ENCODE measurements at regions of chr2 and their contacts with region 1.

Region 1: GRCh38 chr2:101151141-101151858 is at the start of gene TBC1D8:
- DNase-seq: peak; percentile 66
- ATAC-seq: peak; percentile 85
- H3K4me3 ChIP-seq: peak within 1 kb of the TSS; percentile 51 to 66 (median 57)
- H3K4me3 Mint-ChIP-seq: peak within 1 kb of the TSS; percentile 80
- H3K27ac ChIP-seq: no peak within 1 kb of the TSS
- H3K27ac Mint-ChIP-seq: peak within 1 kb of the TSS; percentile 46
- H3K4me1 ChIP-seq: peaks cover 23 to 29% of the 10 kb centered on the region in 2 donors
- H3K4me1 Mint-ChIP-seq: peaks cover 27% of the 10 kb centered on the region
- H3K27me3 ChIP-seq: peaks cover 0 to 26% (median 19%) of the 10 kb centered on the region in 4 experiments
- H3K27me3 Mint-ChIP-seq: peaks cover 24% of the 10 kb centered on the region
- CTCF ChIP-seq: no peak
- total RNA-seq, gene TBC1D8: 15.7 and 18.8 TPM in 2 replicates

Region 2: DNA sequence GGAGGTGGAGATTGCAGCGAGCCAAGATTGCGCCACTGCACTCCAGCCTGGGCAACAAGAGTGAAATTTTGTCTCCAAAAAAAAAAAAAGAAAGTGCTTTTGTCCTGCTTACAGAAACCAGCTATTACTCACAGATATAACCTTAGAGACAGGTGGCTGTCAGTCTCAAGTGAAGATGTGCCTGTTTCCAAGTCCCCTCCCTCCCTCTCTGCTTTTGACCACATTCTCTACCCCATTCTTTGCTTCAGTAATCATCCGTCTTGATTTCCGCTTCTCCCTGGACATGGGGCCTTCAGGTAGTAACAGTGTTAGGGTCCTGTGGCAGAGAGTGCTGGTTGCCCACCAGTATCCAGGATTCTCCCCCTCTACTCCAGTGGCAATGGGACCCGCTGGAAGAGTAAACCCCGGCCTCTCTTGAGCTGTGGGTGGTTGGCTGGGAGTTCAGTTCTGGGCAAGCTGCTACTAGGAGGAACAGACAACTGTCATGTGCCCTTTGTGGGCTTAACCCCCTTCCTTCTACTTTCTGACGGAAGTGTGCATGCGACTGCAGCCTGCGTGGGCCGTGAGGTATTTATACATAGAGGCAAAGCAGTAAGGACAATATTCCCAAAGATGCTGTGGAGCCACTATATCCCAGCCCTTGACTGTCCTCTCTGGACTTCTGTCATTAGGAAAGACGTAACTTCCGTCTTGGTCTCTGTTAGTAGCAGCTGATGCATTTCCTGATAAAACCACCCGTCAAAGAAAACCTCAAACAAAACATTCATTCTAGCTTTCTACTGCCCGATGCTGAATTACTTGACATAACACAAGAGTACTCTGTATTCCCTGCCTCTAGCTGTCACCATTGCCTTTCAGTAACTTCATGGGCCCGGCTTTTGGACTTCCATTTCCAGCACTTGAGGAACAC is 570.7 kb before region 1 on chr2:
- CTCF ChIA-PET with region 1: no interaction called
- POLR2A ChIA-PET with region 1: no interaction called
- intact Hi-C with region 1: loop called (anchors 10 kb)
- DNase-seq: peak; percentile 87
- ATAC-seq: peak; percentile 78
- H3K4me3 ChIP-seq: peak overlapping the region in 4 of 5 experiments; percentile 0 to 36 (median 20)
- H3K4me3 Mint-ChIP-seq: peak overlapping the region; percentile 78
- H3K27ac ChIP-seq: peak overlapping the region; percentile 91 to 95
- H3K27ac Mint-ChIP-seq: peak overlapping the region; percentile 99
- H3K4me1 ChIP-seq: peaks cover 18 to 20% of the 10 kb centered on the region in 2 donors
- H3K4me1 Mint-ChIP-seq: peaks cover 25% of the 10 kb centered on the region
- H3K27me3 ChIP-seq: no peaks in the 10 kb centered on the region
- H3K27me3 Mint-ChIP-seq: no peaks in the 10 kb centered on the region
- CTCF ChIP-seq: no peak

Region 3: GRCh38 chr2:101001691-101002561 is 149.4 kb before region 1 on chr2 and contains the start of gene RPL31:
- CTCF ChIA-PET with region 1: interaction called, 4 read pairs
- POLR2A ChIA-PET with region 1: no interaction called
- intact Hi-C with region 1: loop called (anchors 1 kb)
- DNase-seq: peak; percentile 95
- ATAC-seq: peak; percentile 97
- H3K4me3 ChIP-seq: peak within 1 kb of the TSS; percentile 80 to 99 (median 92)
- H3K4me3 Mint-ChIP-seq: peak within 1 kb of the TSS; percentile 88
- H3K27ac ChIP-seq: peak within 1 kb of the TSS; percentile 84 to 91
- H3K27ac Mint-ChIP-seq: peak within 1 kb of the TSS; percentile 96
- H3K4me1 ChIP-seq: peaks cover 15 to 21% of the 10 kb centered on the region in 2 donors
- H3K4me1 Mint-ChIP-seq: peaks cover 40% of the 10 kb centered on the region
- H3K27me3 ChIP-seq: no peaks in the 10 kb centered on the region
- H3K27me3 Mint-ChIP-seq: no peaks in the 10 kb centered on the region
- CTCF ChIP-seq: no peak
- total RNA-seq, gene RPL31: 1,595 and 1,767 TPM in 2 replicates

Region 4: DNA sequence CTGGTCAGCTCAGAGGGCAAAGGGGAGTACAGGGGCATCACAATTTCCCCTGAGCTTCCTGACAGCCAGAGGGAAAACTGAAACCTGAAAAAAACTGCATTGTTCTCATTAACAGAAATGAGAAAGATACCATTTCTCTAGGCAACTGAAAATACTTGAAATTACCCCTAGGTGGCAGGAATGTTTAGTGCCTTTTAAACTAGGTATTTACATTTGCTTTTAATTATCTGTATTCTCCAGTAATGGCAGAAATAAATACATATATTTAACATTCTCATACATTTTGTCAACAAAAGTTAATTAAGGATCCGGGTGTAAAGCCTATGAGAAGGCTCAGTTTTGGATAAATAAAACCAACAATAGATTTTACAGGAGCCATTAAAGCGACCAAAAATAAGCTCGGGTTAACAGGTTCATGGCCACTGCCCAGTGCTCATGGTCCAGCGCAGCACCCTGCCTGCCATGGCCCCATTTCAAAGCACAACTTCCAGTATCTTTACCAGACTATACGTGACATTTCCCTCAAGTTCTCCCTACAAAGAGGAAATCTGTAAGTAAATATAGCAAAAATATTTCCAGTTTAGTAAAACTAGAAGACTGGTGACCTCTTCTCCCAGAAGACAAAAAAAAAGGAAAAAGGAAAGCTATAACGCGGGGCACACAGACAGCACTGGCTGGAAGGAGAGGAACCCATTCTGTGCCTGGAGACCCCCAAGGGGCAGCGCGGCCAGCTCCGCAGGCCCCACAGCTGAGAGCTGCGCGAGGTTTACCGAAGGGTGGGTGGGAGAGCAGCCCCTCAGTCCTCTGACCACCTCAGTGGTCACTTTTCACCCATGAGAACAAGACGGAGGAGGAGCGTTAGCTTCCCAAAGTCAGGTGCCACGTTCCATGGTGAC is 114.5 kb before region 1 on chr2:
- CTCF ChIA-PET with region 1: interaction called, 13 read pairs
- POLR2A ChIA-PET with region 1: no interaction called
- intact Hi-C with region 1: no loop called
- DNase-seq: no peak
- ATAC-seq: no peak
- H3K4me3 ChIP-seq: no peak overlapping the region
- H3K4me3 Mint-ChIP-seq: no peak overlapping the region
- H3K27ac ChIP-seq: no peak overlapping the region
- H3K27ac Mint-ChIP-seq: no peak overlapping the region
- H3K4me1 ChIP-seq: no peaks in the 10 kb centered on the region
- H3K4me1 Mint-ChIP-seq: peaks cover 2% of the 10 kb centered on the region
- H3K27me3 ChIP-seq: no peaks in the 10 kb centered on the region
- H3K27me3 Mint-ChIP-seq: peaks cover 4% of the 10 kb centered on the region
- CTCF ChIP-seq: peak; percentile 27

Region 5: GRCh38 chr2:101173707-101174295 is 22.5 kb after region 1 on chr2:
- CTCF ChIA-PET with region 1: interaction called, 9 read pairs
- POLR2A ChIA-PET with region 1: interaction called, 6 read pairs
- intact Hi-C with region 1: loop called (anchors 1 kb)
- DNase-seq: peak; percentile 62
- ATAC-seq: peak; percentile 99
- H3K4me3 ChIP-seq: no peak overlapping the region
- H3K4me3 Mint-ChIP-seq: peak overlapping the region; percentile 44
- H3K27ac ChIP-seq: peak overlapping the region in 1 of 2 donors; percentile 69
- H3K27ac Mint-ChIP-seq: peak overlapping the region; percentile 84
- H3K4me1 ChIP-seq: peaks cover 14 to 20% of the 10 kb centered on the region in 2 donors
- H3K4me1 Mint-ChIP-seq: peaks cover 24% of the 10 kb centered on the region
- H3K27me3 ChIP-seq: no peaks in the 10 kb centered on the region
- H3K27me3 Mint-ChIP-seq: no peaks in the 10 kb centered on the region
- CTCF ChIP-seq: no peak

Region 6: GRCh38 chr2:101252408-101253012 is 101.2 kb after region 1 on chr2 and contains the start of gene CNOT11:
- CTCF ChIA-PET with region 1: interaction called, 4 read pairs
- POLR2A ChIA-PET with region 1: no interaction called
- intact Hi-C with region 1: loop called (anchors 5 kb)
- DNase-seq: peak; percentile 99
- ATAC-seq: peak; percentile 85
- H3K4me3 ChIP-seq: peak within 1 kb of the TSS; percentile 68 to 91 (median 88)
- H3K4me3 Mint-ChIP-seq: peak within 1 kb of the TSS; percentile 95
- H3K27ac ChIP-seq: peak within 1 kb of the TSS; percentile 83 to 98
- H3K27ac Mint-ChIP-seq: peak within 1 kb of the TSS; percentile 92
- H3K4me1 ChIP-seq: peaks cover 20 to 30% of the 10 kb centered on the region in 2 donors
- H3K4me1 Mint-ChIP-seq: peaks cover 44% of the 10 kb centered on the region
- H3K27me3 ChIP-seq: no peaks in the 10 kb centered on the region
- H3K27me3 Mint-ChIP-seq: no peaks in the 10 kb centered on the region
- CTCF ChIP-seq: no peak
- total RNA-seq, gene CNOT11: 46.3 and 46.7 TPM in 2 replicates

Region 7: GRCh38 chr2:101308432-101309210 is 157.3 kb after region 1 on chr2 and contains the start of gene RNF149:
- CTCF ChIA-PET with region 1: no interaction called
- POLR2A ChIA-PET with region 1: no interaction called
- intact Hi-C with region 1: loop called (anchors 5 kb)
- DNase-seq: peak; percentile 94
- ATAC-seq: peak; percentile 82
- H3K4me3 ChIP-seq: peak within 1 kb of the TSS; percentile 57 to 93 (median 76)
- H3K4me3 Mint-ChIP-seq: peak within 1 kb of the TSS; percentile 93
- H3K27ac ChIP-seq: peak within 1 kb of the TSS; percentile 84 to 85
- H3K27ac Mint-ChIP-seq: peak within 1 kb of the TSS; percentile 92
- H3K4me1 ChIP-seq: peaks cover 32 to 44% of the 10 kb centered on the region in 2 donors
- H3K4me1 Mint-ChIP-seq: peaks cover 54% of the 10 kb centered on the region
- H3K27me3 ChIP-seq: no peaks in the 10 kb centered on the region
- H3K27me3 Mint-ChIP-seq: no peaks in the 10 kb centered on the region
- CTCF ChIP-seq: no peak
- total RNA-seq, gene RNF149: 71.6 and 78.0 TPM in 2 replicates